Activated naive CD4-positive, alpha-beta T cell treated with anti-CD3 and anti-CD28 coated beads, Interleukin-2, amount 10 ng/mL, durations not matched to agents 7 days and 5 days (primary cell): ENCODE measurements at regions of chr22 and their contacts with region 1.

Region 1: GRCh38 chr22:24230911-24231656 is 13.8 kb downstream of the GGT5 start:
- DNase-seq: peak; percentile 78
- H3K4me3 Mint-ChIP-seq: no peak overlapping the region
- H3K27ac Mint-ChIP-seq: no peak overlapping the region
- H3K4me1 Mint-ChIP-seq: peaks cover 4% of the 10 kb centered on the region
- H3K27me3 Mint-ChIP-seq: peaks cover 10% of the 10 kb centered on the region

Region 2: GRCh38 chr22:24101911-24102321 is 129.2 kb before region 1 on chr22:
- CTCF ChIA-PET with region 1: no interaction called
- DNase-seq: no peak
- H3K4me3 Mint-ChIP-seq: no peak overlapping the region
- H3K27ac Mint-ChIP-seq: no peak overlapping the region
- H3K4me1 Mint-ChIP-seq: peaks cover 22% of the 10 kb centered on the region
- H3K27me3 Mint-ChIP-seq: no peaks in the 10 kb centered on the region

Region 3: GRCh38 chr22:24146194-24146616 is 84.9 kb before region 1 on chr22:
- CTCF ChIA-PET with region 1: no interaction called
- DNase-seq: peak; percentile 64
- H3K4me3 Mint-ChIP-seq: peak overlapping the region; percentile 3
- H3K27ac Mint-ChIP-seq: peak overlapping the region; percentile 89
- H3K4me1 Mint-ChIP-seq: peaks cover 68% of the 10 kb centered on the region
- H3K27me3 Mint-ChIP-seq: no peaks in the 10 kb centered on the region

Region 4: GRCh38 chr22:24156913-24157821 is 73.9 kb before region 1 on chr22:
- CTCF ChIA-PET with region 1: no interaction called
- DNase-seq: peak; percentile 95
- H3K4me3 Mint-ChIP-seq: peak overlapping the region; percentile 91
- H3K27ac Mint-ChIP-seq: peak overlapping the region; percentile 95
- H3K4me1 Mint-ChIP-seq: peaks cover 62% of the 10 kb centered on the region
- H3K27me3 Mint-ChIP-seq: no peaks in the 10 kb centered on the region

Region 5: DNA sequence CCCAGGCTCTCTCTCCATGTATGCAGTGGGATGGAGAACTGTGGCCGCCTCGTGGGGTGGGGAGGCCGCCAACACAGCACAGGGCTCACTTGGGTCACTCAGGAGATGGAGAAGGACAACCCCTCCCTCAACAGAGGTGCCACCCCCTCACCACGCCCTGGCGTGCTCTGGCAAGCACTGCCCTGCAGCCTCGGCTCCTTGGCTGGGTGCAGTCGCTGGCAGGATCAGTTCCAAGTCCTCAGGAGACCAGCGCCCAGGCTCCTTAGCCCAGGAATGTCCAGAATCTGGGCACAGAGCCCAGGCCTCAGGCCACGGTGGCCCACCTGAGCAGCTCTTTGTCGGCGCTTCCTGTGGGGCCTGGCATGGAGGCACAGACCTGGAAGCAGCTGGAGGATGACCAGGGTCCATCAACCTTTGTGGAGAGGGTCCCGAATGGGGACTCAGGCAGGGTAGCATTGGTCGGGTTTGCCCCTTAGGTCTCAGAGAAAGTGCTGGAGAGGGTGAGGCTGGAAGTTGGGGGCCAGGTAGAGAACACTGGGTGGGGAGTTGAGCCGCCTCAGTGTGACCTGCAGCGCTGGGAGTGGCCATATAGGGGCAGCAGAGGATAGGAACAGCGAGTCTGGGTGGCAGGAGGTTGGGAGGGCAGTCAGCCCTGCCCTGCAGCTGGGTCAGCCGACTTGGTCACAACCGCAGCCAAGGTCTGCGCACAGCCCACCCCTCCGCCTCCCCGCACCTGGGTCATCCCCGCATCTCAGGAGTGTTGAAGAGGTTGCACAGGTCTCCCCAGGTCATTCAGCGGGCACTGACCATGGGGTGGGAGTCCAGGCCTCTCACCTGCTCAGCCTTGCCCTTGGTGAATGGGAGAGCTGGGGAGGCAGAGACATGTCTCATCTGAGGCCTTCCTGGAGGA is 41.6 kb before region 1 on chr22:
- CTCF ChIA-PET with region 1: interaction called, 43 read pairs
- DNase-seq: peak; percentile 74
- H3K4me3 Mint-ChIP-seq: no peak overlapping the region
- H3K27ac Mint-ChIP-seq: no peak overlapping the region
- H3K4me1 Mint-ChIP-seq: peaks cover 2% of the 10 kb centered on the region
- H3K27me3 Mint-ChIP-seq: peaks cover 17% of the 10 kb centered on the region

Region 6: GRCh38 chr22:24198682-24199052 is 32.4 kb before region 1 on chr22:
- CTCF ChIA-PET with region 1: interaction called, 27 read pairs
- DNase-seq: no peak
- H3K4me3 Mint-ChIP-seq: no peak overlapping the region
- H3K27ac Mint-ChIP-seq: peak overlapping the region; percentile 86
- H3K4me1 Mint-ChIP-seq: peaks cover 40% of the 10 kb centered on the region
- H3K27me3 Mint-ChIP-seq: peaks cover 35% of the 10 kb centered on the region

Region 7: GRCh38 chr22:24219750-24220149 is 11.3 kb before region 1 on chr22:
- CTCF ChIA-PET with region 1: interaction called, 28 read pairs
- DNase-seq: no peak
- H3K4me3 Mint-ChIP-seq: no peak overlapping the region
- H3K27ac Mint-ChIP-seq: no peak overlapping the region
- H3K4me1 Mint-ChIP-seq: no peaks in the 10 kb centered on the region
- H3K27me3 Mint-ChIP-seq: peaks cover 36% of the 10 kb centered on the region

Region 8: DNA sequence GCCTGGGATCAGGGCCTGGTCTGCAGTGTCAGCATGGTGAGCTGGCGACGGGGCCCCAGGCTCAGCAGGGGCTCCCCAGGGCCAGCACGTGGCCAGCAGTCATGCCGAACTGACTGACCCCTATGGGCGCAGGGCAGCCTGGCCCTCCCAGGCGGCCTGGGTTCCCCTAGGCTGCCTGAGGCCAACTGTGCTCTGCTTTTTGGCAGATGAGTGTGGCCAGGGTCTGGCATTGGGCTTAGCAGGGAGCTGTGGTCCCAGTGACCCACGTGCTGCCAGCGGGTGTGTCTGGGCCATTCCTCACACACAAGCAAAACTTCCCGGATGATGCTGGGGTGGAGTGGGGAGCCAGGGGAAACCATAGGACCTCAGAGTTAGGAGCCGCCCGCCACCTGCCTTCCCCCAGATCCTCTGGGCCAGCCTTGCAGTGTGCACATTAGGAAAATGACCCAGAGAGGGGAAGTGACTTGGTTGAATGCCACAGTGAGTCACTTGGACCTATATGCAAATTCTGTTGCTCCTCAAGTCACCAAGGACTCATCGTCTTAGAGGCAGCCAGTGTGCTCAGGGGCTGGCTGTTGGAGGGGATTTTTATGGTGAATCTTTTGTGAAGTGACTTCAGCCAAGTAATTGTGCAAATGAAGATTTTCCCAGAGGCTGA is 202.9 kb after region 1 on chr22:
- CTCF ChIA-PET with region 1: no interaction called
- DNase-seq: no peak
- H3K4me3 Mint-ChIP-seq: peak overlapping the region; percentile 25
- H3K27ac Mint-ChIP-seq: peak overlapping the region; percentile 81
- H3K4me1 Mint-ChIP-seq: peaks cover 86% of the 10 kb centered on the region
- H3K27me3 Mint-ChIP-seq: no peaks in the 10 kb centered on the region